ENCODE measurements at regions of chr7 and their contacts with region 1.

Region 1: DNA sequence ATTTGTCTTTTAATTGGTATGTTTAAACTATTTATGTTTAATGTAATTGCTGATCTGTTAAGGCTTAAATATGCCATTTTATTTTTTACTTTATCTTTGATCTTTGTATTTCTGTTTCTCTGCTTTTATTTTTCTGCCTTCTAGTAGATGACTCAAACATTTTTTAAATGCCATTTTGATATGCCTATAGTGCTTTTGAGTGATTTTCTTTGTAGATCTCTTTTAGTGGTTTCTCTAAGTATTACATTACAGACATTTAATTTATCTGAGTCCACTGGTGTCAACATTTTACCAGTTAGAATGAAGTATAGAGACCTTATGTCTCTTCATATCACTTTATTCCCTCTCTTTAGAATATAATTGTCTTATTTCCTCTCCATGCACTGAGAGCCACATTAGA is 32.7 kb downstream of the IL6 start:
- DNase-seq: no peak
- ATAC-seq: no peak
- H3K4me3 ChIP-seq: no peak overlapping the region
- H3K27ac ChIP-seq: no peak overlapping the region
- H3K4me1 ChIP-seq: no peaks in the 10 kb centered on the region
- CTCF ChIP-seq: no peak
- EP300 ChIP-seq: no peak
- POLR2A ChIP-seq: no peak
- RAD21 ChIP-seq: no peak

Region 2: DNA sequence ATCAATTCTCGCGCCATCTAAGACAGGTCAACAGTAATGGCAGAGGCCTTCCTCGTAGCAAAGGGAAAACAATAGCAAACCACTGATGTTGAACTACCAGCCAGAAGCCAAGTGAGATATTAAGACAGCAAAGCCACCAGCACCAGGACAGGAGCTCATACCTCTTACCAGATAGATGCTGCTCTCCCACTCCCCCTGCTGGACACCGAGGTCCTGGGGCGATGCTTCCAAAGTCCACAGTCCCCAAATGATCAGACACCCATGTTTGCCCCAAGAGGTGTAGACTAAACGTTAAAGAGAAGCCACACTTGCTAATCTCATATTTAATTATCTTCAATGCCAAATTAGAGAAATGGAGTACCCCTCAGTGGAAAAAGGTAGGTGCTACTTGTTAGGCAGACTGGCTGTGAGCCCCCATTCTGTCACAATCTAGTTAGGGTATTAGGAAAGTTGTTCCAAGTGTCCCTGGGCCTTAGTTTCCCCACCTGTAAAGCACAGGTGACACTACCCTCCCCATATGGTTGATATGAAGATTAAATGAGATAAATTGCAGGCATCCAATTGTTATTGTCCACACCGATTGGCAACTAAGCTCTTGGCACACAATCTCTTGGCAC is 23.0 kb after region 1 on chr7:
- CTCF ChIA-PET with region 1: interaction called, 14 read pairs
- POLR2A ChIA-PET with region 1: no interaction called
- DNase-seq: peak; percentile 65 to 73
- ATAC-seq: peak; percentile 92 to 98
- H3K4me3 ChIP-seq: no peak overlapping the region
- H3K27ac ChIP-seq: no peak overlapping the region
- H3K4me1 ChIP-seq: peaks cover 7% of the 10 kb centered on the region; the same call in 1 of the 3 replicates
- CTCF ChIP-seq: peak; percentile 66
- EP300 ChIP-seq: no peak
- POLR2A ChIP-seq: no peak
- RAD21 ChIP-seq: peak; percentile 59 to 68

Measured in A549 (cell line).